ENCODE measurements at regions of chr9 and their contacts with region 1.

Region 1: DNA sequence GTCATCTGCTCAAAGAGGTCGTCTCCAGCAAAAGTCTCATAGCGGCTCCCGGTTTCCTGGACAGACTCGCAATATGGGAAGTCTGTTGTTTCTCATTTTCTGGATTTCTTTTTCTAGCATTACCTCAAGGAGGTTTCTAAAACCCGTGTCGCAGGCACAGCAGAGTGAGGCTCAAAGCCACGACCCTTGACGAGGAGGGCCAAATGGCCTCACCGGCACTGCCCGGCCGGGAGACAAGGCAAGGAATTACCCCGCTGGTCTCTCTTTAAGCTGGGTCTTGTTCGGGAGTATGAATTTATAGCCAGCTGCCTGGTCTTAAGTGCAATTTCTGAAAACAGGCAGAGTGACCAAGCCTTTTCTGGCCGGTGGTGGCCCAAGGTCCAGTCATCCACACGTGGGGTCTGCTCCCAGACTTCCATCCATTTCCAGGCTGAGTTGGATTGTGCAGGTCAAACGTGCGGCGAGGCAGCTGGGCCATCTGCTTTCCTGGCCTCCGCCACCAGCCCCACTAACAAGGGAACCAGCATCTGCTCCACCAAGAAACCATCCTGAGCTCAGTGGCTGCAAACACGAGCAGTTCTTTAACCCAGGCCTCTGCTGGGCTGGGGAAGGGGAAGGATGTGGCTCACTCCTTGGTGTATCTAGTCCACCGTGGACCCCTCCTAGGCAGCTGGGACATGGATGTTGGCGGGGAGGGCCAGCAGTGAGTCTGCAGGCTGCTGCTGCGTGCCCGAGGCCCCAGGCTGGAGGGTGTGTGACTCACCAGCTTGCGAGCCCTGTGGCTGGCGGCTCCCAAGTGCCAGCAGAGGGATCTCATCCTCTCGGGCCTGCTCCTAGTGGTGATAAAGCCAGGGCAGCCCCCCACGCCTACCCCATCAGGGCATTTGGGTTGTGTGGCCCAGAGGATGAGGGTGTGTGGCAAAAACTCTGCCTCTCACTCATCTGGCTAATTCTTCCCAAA is 55.6 kb upstream of the COL5A1 start:
- DNase-seq: peak; percentile 6
- H3K4me3 ChIP-seq: no peak overlapping the region
- H3K27ac ChIP-seq: no peak overlapping the region
- H3K4me1 ChIP-seq: no peaks in the 10 kb centered on the region
- H3K27me3 ChIP-seq: no peaks in the 10 kb centered on the region
- CTCF ChIP-seq: no peak

Region 2: DNA sequence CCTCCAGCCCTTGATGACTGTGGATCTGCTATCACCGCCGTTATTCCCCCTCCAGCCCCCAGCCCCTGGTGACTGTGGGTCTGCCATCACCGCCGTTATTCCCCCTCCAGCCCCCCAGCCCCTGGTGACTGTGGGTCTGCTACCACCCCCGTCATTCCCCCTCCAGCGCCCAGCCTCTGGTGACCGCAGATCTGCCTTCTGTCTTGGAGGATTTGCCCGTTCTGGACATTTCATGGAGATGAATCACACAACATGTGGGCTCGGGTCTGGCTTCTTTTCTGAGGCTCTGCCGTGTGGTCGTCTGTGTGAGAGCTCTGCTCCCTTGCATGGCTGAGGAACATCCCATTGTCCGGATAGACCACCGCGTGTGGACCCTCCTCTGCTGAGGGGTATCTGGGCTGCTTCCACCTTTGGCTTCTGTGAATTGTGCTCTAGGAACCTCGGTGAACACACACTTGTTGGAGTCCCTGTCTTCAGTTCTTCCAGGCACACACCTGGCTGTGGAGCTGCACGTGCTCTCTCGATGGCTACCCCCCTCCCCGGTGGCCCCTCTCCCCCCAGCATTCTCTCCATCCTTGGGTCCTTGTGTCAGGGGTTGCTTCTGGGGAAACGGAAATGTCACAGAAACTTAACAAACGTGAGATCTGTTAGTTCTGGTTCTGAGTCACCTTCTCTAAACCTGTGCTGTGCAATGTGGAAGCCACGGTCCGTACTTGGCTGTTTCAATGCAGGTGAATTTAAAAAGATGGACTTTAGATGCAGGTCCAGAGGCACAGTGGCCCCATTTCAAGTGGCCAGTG is 49.7 kb before region 1 on chr9:
- CTCF ChIA-PET with region 1: no interaction called
- dilution Hi-C with region 1: no loop called
- in situ Hi-C with region 1: no loop called
- intact Hi-C with region 1: no loop called
- DNase-seq: peak; percentile 14
- H3K4me3 ChIP-seq: no peak overlapping the region
- H3K27ac ChIP-seq: no peak overlapping the region
- H3K4me1 ChIP-seq: no peaks in the 10 kb centered on the region
- H3K27me3 ChIP-seq: no peaks in the 10 kb centered on the region
- CTCF ChIP-seq: no peak

Region 3: DNA sequence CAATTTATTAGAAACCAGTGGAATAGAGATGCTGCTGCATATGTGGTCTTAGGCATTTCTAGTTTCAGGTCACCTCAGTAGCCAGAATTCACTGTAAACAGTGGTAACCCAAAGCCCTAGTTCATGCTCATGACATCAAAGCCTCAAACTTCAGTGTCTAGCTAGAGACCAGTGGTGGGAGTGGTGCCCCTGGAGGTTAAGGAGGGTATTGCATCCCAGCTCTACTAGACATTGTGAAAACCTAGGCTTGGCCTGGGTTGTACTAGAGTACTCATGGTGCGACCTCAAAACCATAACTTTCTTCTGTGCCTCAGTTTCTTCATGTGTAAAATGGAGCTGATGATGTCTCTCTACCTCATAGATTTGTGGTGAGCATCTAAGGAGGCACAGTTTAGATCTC is 74.4 kb after region 1 on chr9:
- CTCF ChIA-PET with region 1: no interaction called
- dilution Hi-C with region 1: loop called (anchors 5 kb)
- in situ Hi-C with region 1: no loop called
- intact Hi-C with region 1: no loop called
- DNase-seq: no peak
- H3K4me3 ChIP-seq: no peak overlapping the region
- H3K27ac ChIP-seq: no peak overlapping the region
- H3K4me1 ChIP-seq: no peaks in the 10 kb centered on the region
- H3K27me3 ChIP-seq: no peaks in the 10 kb centered on the region
- CTCF ChIP-seq: peak; percentile 31 to 40